ENCODE measurements at regions of chr18 and their contacts with region 1.

Region 1: GRCh38 chr18:54181856-54182602 is 42.4 kb downstream of the MBD2 start:
- DNase-seq: no peak
- ATAC-seq: peak; percentile 89
- H3K4me3 Mint-ChIP-seq: no peak overlapping the region
- H3K27ac Mint-ChIP-seq: no peak overlapping the region
- H3K4me1 Mint-ChIP-seq: peaks cover 10% of the 10 kb centered on the region
- H3K27me3 Mint-ChIP-seq: no peaks in the 10 kb centered on the region

Region 2: DNA sequence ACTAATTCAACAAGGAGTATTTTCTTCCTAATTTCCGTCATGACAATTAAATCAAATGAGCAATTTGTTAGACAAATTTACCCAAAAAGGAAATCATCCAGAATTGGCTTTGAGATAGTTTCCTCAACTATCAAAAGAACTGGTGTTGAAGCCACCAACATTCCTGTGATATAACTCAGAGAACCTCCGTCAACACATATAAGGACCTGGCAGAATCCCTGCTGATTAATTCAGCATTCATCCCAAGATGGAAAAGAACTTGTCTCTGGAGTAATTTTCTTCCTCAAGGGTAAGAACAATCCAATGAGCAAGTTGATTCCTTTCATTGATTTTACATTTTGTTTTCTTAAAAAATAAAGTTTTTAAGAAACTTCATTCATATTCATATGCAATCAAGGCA is 19.6 kb before region 1 on chr18:
- CTCF ChIA-PET with region 1: interaction called, 3 read pairs
- POLR2A ChIA-PET with region 1: no interaction called
- intact Hi-C with region 1: loop called in 1 of 2 experiments (anchors 1 kb)
- DNase-seq: no peak
- ATAC-seq: no peak
- H3K4me3 Mint-ChIP-seq: no peak overlapping the region
- H3K27ac Mint-ChIP-seq: no peak overlapping the region
- H3K4me1 Mint-ChIP-seq: peaks cover 24% of the 10 kb centered on the region
- H3K27me3 Mint-ChIP-seq: no peaks in the 10 kb centered on the region

Region 3: DNA sequence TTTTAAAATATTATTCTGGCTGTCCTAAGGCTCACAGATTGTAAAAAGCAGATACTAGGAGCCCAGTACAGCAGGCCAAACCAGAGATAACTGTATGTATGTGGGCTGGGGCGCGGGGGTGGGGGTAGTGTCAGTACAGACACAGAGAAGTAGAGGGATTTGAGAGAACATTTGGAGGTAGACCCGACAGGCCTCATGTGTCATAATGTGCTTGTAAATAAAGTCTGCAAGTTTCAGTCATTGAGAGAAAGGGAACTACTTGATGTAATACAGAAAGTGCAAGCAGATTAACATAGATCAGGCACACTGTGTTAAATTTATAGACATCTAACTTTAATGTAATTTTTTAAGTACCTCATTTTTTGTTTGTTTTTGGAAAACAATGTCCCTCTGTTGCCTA is 79.9 kb after region 1 on chr18:
- CTCF ChIA-PET with region 1: no interaction called
- POLR2A ChIA-PET with region 1: no interaction called
- intact Hi-C with region 1: loop called in 1 of 2 experiments (anchors 2 kb)
- DNase-seq: peak; percentile 82
- ATAC-seq: peak; percentile 71
- H3K4me3 Mint-ChIP-seq: peak overlapping the region; percentile 52
- H3K27ac Mint-ChIP-seq: peak overlapping the region; percentile 90
- H3K4me1 Mint-ChIP-seq: peaks cover 54% of the 10 kb centered on the region
- H3K27me3 Mint-ChIP-seq: no peaks in the 10 kb centered on the region

Region 4: GRCh38 chr18:54269893-54270844 is 88.1 kb after region 1 on chr18:
- CTCF ChIA-PET with region 1: interaction called, 7 read pairs
- POLR2A ChIA-PET with region 1: no interaction called
- intact Hi-C with region 1: loop called in 1 of 2 experiments (anchors 1 kb)
- DNase-seq: peak; percentile 75
- ATAC-seq: peak; percentile 63
- H3K4me3 Mint-ChIP-seq: peak overlapping the region; percentile 78
- H3K27ac Mint-ChIP-seq: peak overlapping the region; percentile 99
- H3K4me1 Mint-ChIP-seq: peaks cover 28% of the 10 kb centered on the region
- H3K27me3 Mint-ChIP-seq: no peaks in the 10 kb centered on the region

Measured in activated CD4-positive, alpha-beta T cell treated with anti-CD3 and anti-CD28 coated beads for 36 hours (primary cell).